GM12878 (cell line): ENCODE measurements at regions of chr13 and their contacts with region 1.

Region 1: GRCh38 chr13:51583875-51584730 is at the start of gene WDFY2:
- DNase-seq: peak; percentile 99
- ATAC-seq: peak; percentile 86
- H3K4me3 ChIP-seq: peak within 1 kb of the TSS; percentile 95
- H3K27ac ChIP-seq: peak within 1 kb of the TSS; percentile 64
- H3K4me1 ChIP-seq: peaks cover 9% of the 10 kb centered on the region; the same call in 1 of the 2 replicates
- H3K27me3 ChIP-seq: no peaks in the 10 kb centered on the region
- CTCF ChIP-seq: peak in 1 of 3 experiments; percentile 24; a peak in 2 of 6 replicates
- EP300 ChIP-seq: no peak
- POLR2A ChIP-seq: peak; percentile 72
- RAD21 ChIP-seq: peak; percentile 3; the same call in 1 of the 2 replicates
- polyA plus RNA-seq, gene WDFY2: 2.1 to 2.7 TPM

Region 2: GRCh38 chr13:51222037-51222685 is 361.9 kb before region 1 on chr13 and contains the start of gene FAM124A:
- CTCF ChIA-PET with region 1: no interaction called
- POLR2A ChIA-PET with region 1: no interaction called
- RAD21 ChIA-PET with region 1: no interaction called
- SMC1A ChIA-PET with region 1: no interaction called
- in situ Hi-C with region 1: no loop called
- intact Hi-C with region 1: no loop called
- DNase-seq: no peak
- ATAC-seq: peak; percentile 81
- H3K4me3 ChIP-seq: peak within 1 kb of the TSS; percentile 58
- H3K27ac ChIP-seq: no peak within 1 kb of the TSS
- H3K4me1 ChIP-seq: no peaks in the 10 kb centered on the region
- H3K27me3 ChIP-seq: peaks cover 6 to 28% of the 10 kb centered on the region in 2 experiments
- CTCF ChIP-seq: peak in 1 of 3 experiments; percentile 15; a peak in 2 of 6 replicates
- EP300 ChIP-seq: no peak
- POLR2A ChIP-seq: no peak; the same call in 1 of the 2 replicates
- RAD21 ChIP-seq: no peak
- polyA plus RNA-seq, gene FAM124A: not detected

Region 3: GRCh38 chr13:51562011-51562671 is 22.0 kb before region 1 on chr13:
- CTCF ChIA-PET with region 1: interaction called, 3 read pairs
- POLR2A ChIA-PET with region 1: interaction called, 4 read pairs
- RAD21 ChIA-PET with region 1: interaction called, 6 read pairs
- SMC1A ChIA-PET with region 1: interaction called, 15 read pairs
- in situ Hi-C with region 1: no loop called
- intact Hi-C with region 1: no loop called
- DNase-seq: peak; percentile 70
- ATAC-seq: peak; percentile 94
- H3K4me3 ChIP-seq: no peak overlapping the region
- H3K27ac ChIP-seq: peak overlapping the region; percentile 55
- H3K4me1 ChIP-seq: peaks cover 31% of the 10 kb centered on the region
- H3K27me3 ChIP-seq: no peaks in the 10 kb centered on the region
- CTCF ChIP-seq: no peak
- EP300 ChIP-seq: no peak
- POLR2A ChIP-seq: no peak
- RAD21 ChIP-seq: no peak

Region 4: DNA sequence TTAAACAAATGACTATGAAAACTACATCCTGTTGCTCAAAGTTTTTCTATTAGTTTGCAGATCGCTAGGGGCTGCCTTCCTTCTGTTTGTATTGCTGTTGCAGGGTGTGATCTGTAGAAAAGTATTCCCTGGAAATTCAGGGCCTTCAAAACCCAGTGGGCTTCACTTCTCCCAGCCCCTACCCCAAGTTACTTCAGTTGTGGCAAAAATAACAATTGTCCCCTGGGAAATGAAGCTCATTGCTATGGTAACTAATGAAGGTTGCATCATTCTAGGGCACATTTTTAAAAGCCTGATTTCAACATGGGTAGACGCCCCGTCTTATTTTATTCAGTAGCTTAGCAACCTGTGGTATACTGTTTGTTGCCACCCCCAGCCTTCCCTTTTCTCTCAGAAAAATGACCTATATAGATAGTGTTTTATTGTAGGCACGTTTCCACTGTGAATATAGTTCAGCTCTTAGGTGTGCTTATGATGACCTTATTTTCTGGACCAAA is 61.1 kb after region 1 on chr13:
- CTCF ChIA-PET with region 1: interaction called, 3 read pairs
- POLR2A ChIA-PET with region 1: interaction called, 6 read pairs
- RAD21 ChIA-PET with region 1: interaction called, 9 read pairs
- SMC1A ChIA-PET with region 1: interaction called, 14 read pairs
- in situ Hi-C with region 1: no loop called
- intact Hi-C with region 1: no loop called
- DNase-seq: no peak
- ATAC-seq: peak; percentile 85
- H3K4me3 ChIP-seq: no peak overlapping the region; the same call in 1 of the 2 replicates
- H3K27ac ChIP-seq: no peak overlapping the region; the same call in 1 of the 2 replicates
- H3K4me1 ChIP-seq: peaks cover 12% of the 10 kb centered on the region
- H3K27me3 ChIP-seq: no peaks in the 10 kb centered on the region
- CTCF ChIP-seq: no peak
- EP300 ChIP-seq: no peak
- POLR2A ChIP-seq: no peak
- RAD21 ChIP-seq: no peak

Region 5: DNA sequence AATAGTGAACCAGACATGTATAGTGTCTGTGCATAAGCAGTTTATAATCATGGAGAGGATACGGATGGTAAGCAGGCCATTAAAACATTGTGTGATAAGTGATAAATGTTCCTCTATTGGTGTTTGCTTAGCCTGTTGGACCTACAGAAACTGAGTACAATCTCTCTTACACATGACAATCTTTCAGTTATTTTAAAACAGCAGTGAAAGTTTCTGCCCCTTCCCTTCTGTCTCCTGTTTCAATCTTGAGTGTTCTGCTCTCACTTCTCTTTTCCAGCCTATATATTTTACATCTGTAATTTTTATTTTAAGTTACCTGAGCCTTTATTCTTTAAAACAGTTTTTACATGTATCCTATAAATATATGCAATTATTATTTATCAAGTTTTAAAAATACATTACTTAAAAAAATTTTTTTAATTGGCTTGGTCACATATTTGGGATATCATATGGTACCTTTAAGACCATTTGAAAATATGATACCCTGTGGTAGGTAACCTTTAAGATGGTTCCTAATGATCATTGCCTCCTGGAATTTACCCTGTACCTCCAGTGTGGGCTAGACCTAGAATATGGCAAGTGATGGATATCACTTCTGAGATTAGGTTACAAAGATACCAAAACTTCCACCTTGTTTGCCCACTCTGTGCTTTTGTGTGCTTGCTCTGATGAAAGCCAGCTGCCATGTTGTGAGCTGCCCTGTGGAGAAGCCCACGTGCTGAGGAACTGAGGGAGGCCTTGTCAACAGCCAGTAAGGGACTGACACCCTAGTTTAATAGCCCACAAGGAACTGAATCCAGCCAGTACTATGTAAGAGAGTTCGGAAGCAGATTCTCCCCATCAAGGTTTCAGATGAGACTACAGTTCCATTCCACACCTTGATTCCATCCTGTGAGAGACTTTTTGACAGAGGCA is 120.6 kb after region 1 on chr13:
- CTCF ChIA-PET with region 1: no interaction called
- POLR2A ChIA-PET with region 1: no interaction called
- RAD21 ChIA-PET with region 1: no interaction called
- SMC1A ChIA-PET with region 1: interaction called, 6 read pairs
- in situ Hi-C with region 1: no loop called
- intact Hi-C with region 1: loop called (anchors 5 kb)
- DNase-seq: peak; percentile 52
- ATAC-seq: peak; percentile 93
- H3K4me3 ChIP-seq: no peak overlapping the region
- H3K27ac ChIP-seq: peak overlapping the region; percentile 78
- H3K4me1 ChIP-seq: peaks cover 34% of the 10 kb centered on the region
- H3K27me3 ChIP-seq: no peaks in the 10 kb centered on the region
- CTCF ChIP-seq: no peak
- EP300 ChIP-seq: peak in 1 of 2 experiments; percentile 49; a peak in 1 of 4 replicates
- POLR2A ChIP-seq: no peak
- RAD21 ChIP-seq: no peak

Region 6: DNA sequence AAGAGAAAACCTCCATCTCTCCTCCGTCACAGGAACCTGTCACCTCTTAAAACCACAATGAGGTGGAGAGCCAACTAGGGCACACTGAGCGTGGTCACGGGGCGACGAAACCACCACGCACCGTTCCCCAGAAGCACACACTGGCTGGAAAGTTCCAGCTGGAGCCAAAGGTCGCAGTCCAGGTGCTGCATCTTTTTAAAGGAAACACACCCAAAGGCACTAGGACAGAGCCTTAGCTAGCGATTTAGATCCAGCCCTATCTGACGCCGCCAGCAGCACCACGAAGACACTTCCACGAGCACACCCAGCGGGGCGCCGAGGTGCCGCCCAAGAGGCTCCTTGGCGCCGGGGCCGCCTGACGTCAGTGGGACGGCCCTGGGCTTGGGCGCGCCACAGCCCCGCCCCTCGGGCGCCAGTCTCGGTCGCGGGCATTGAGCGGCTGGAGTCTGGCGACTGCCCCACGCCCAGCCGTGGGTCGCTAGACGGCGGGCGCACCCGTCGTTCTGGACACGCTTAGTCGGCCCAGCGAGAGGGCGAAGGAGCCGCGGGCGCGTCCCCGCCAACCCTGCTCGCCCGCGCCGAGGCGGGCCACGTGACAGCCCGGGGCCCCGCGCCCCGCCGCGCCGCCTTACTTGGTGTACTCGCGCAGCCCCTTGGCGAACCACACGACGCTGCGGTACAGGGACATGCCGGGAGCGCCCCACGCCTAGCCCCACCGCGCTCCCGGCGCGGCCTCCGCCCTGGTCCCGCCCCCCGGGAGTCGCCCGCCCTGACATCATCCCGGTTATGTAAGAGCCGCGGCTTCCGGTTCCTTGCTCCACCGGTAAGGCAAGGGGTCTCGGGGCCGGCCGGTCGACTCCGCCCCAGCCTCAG is 219.6 kb after region 1 on chr13 and contains the start of gene DHRS12:
- CTCF ChIA-PET with region 1: interaction called, 26 read pairs
- POLR2A ChIA-PET with region 1: no interaction called
- RAD21 ChIA-PET with region 1: interaction called, 25 read pairs
- SMC1A ChIA-PET with region 1: interaction called, 18 read pairs
- in situ Hi-C with region 1: no loop called
- intact Hi-C with region 1: loop called (anchors 2 kb)
- DNase-seq: peak; percentile 58
- ATAC-seq: peak; percentile 86
- H3K4me3 ChIP-seq: peak within 1 kb of the TSS; percentile 82
- H3K27ac ChIP-seq: peak within 1 kb of the TSS; percentile 91
- H3K4me1 ChIP-seq: peaks cover 17% of the 10 kb centered on the region
- H3K27me3 ChIP-seq: no peaks in the 10 kb centered on the region
- CTCF ChIP-seq: no peak; a peak in 1 of 6 replicates
- EP300 ChIP-seq: peak in 1 of 2 experiments; percentile 30; a peak in 1 of 4 replicates
- POLR2A ChIP-seq: peak; percentile 95
- RAD21 ChIP-seq: 0 out of 2 replicates have a peak, but pooled peaks have one; percentile 14
- polyA plus RNA-seq, gene DHRS12: 2.9 to 4.0 TPM